ENCODE measurements at regions of chrX and their contacts with region 1.

Region 1: DNA sequence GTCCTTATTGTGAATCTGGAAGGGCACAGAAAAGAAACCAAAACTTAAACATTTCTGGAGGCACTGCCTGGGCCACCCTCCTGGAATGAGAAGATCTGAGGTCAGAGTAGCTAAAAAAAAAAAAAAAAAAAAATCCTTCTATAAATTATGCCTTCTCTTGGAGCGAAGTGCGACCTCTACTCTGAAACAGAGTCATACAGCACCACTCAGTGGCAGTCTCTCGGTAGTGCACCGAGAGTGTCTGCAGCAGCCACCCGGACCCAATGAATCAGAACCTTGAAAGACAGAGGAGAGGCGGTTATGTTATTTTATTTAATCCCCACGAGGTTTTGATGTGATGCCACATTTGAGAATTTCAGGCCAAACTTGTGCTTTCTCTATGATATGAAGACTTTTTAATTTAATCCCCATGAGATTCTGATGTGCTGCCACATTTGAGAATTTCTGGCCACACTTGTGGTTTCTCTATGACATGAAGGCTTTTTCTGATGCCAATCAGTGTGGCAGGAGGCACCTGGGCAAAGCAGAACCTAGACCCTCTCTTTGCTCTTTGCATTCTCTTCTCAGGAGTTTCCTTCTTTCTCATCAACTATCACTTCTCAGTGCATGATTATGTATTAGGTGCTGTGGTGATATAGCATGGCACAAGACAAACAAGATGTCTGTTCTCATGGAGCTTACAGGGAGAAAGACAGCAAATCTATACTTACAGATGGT is 5.6 kb upstream of the CT47C1 start:
- DNase-seq: no peak
- H3K4me3 ChIP-seq: no peak overlapping the region
- CTCF ChIP-seq: peak; percentile 49

Region 2: GRCh38 chrX:118839334-118839958 is 227.7 kb before region 1 on chrX:
- CTCF ChIA-PET with region 1: interaction called, 22 read pairs
- POLR2A ChIA-PET with region 1: no interaction called
- DNase-seq: no peak
- H3K4me3 ChIP-seq: peak overlapping the region; percentile 52
- CTCF ChIP-seq: peak; percentile 74

Region 3: GRCh38 chrX:118847676-118848075 is 219.5 kb before region 1 on chrX:
- CTCF ChIA-PET with region 1: interaction called, 45 read pairs
- POLR2A ChIA-PET with region 1: no interaction called
- DNase-seq: no peak
- H3K4me3 ChIP-seq: no peak overlapping the region
- CTCF ChIP-seq: peak; percentile 29

Region 4: DNA sequence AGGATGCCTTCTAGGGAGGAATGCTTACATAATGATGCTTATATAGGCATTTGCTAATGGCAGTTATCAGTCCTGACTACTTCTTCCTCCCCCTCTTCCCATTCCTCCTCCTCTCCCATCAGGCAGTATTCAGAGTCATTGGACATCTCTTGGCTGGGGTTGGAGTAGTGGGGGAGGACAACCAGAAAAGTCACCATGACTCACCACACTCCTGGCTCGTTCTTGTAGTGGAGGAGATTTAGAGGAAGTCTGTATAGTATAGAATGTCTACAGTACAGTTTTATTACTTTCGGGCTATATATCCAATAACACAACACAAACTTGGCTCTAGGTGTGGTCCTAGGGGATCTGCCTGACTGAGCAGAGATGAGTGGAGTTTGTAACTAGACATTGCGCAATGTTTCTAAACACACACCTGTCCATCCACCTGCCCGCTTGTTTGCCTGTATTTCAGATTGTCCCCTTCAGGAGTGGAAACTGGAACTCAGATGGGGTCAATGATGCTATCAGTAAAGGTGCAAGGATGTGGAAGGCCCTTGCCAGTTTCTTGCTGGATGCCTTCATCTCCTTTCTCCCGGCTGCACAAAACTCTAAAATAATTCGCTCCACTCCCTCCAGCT is 88.3 kb after region 1 on chrX:
- CTCF ChIA-PET with region 1: no interaction called
- POLR2A ChIA-PET with region 1: no interaction called
- DNase-seq: no peak
- H3K4me3 ChIP-seq: no peak overlapping the region
- CTCF ChIP-seq: no peak

Region 5: GRCh38 chrX:120485638-120486520 is 1418.7 kb after region 1 on chrX:
- CTCF ChIA-PET with region 1: no interaction called
- POLR2A ChIA-PET with region 1: no interaction called
- DNase-seq: no peak
- H3K4me3 ChIP-seq: peak overlapping the region; percentile 58
- CTCF ChIP-seq: peak; percentile 38